Activated CD4-positive, alpha-beta T cell treated with anti-CD3 and anti-CD28 coated beads for 36 hours (primary cell): ENCODE measurements at regions of chr1 and their contacts with region 1.

Region 1: GRCh38 chr1:117312225-117313138 is 54.8 kb upstream of the MAN1A2 start:
- DNase-seq: peak; percentile 5
- ATAC-seq: peak; percentile 66
- H3K4me3 Mint-ChIP-seq: no peak overlapping the region
- H3K27ac Mint-ChIP-seq: no peak overlapping the region
- H3K4me1 Mint-ChIP-seq: peaks cover 2% of the 10 kb centered on the region
- H3K27me3 Mint-ChIP-seq: peaks cover 2% of the 10 kb centered on the region

Region 2: DNA sequence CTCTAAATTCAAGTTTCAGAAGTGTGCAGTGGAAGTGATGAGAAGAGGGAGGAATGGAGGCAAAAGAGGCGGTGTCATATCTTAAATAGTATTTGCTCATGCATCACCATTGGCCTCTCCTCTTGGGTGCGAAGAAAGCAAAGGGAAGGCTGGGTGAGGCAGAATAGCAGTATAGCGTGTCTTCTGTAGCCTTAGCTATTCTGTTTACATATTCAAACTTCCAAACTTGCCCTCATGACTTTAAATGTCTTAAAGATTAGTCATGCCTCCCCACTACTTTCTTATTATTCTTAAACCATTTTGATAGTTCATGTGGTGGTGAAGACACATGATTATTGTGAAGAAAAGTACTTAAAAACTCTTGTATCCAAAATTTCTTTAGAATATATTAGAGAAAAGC is 188.8 kb after region 1 on chr1:
- CTCF ChIA-PET with region 1: no interaction called
- POLR2A ChIA-PET with region 1: no interaction called
- intact Hi-C with region 1: loop called in 1 of 2 experiments (anchors 10 kb)
- DNase-seq: no peak
- ATAC-seq: no peak
- H3K4me3 Mint-ChIP-seq: no peak overlapping the region
- H3K27ac Mint-ChIP-seq: no peak overlapping the region
- H3K4me1 Mint-ChIP-seq: no peaks in the 10 kb centered on the region
- H3K27me3 Mint-ChIP-seq: no peaks in the 10 kb centered on the region